Common myeloid progenitor, CD34-positive (primary cell): ENCODE measurements at regions of chr16 and their contacts with region 1.

Region 1: GRCh38 chr16:19582050-19582831 is 26.7 kb downstream of the VPS35L start:
- DNase-seq: no peak
- H3K4me3 ChIP-seq: no peak overlapping the region
- H3K27ac ChIP-seq: no peak overlapping the region
- H3K4me1 ChIP-seq: no peaks in the 10 kb centered on the region
- H3K27me3 ChIP-seq: no peaks in the 10 kb centered on the region

Region 2: DNA sequence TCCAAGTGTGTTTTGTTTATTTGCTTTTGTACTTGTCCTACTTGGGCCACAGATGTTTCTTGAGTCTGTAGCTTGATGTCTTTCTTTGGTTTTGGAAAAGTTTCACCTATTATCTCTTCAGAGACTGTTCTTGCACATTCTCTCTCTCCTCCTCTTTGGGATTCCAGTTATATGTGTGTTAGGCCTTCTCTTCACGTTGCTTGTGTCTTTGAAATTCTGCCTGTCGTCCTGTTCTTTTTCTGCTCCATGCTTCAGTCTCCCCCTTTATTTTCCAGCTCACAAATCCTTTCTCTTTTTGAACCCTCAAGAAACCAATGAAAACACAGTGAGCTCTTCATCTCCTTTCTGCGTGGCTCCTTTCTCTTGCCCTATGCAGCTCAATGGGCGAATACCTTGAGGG is 18.9 kb before region 1 on chr16:
- CTCF ChIA-PET with region 1: interaction called, 5 read pairs
- POLR2A ChIA-PET with region 1: interaction called, 12 read pairs
- DNase-seq: no peak
- H3K4me3 ChIP-seq: no peak overlapping the region
- H3K27ac ChIP-seq: no peak overlapping the region
- H3K4me1 ChIP-seq: no peaks in the 10 kb centered on the region
- H3K27me3 ChIP-seq: no peaks in the 10 kb centered on the region